ENCODE measurements at regions of chr11 and their contacts with region 1.

Region 1: GRCh38 chr11:86955361-86956120 is at the start of gene FZD4:
- DNase-seq: peak; percentile 86 to 94
- H3K4me3 ChIP-seq: peak within 1 kb of the TSS; percentile 88 to 89
- H3K27ac ChIP-seq: peak within 1 kb of the TSS; percentile 90
- H3K4me1 ChIP-seq: peaks cover 0 to 44% (median 29%) of the 10 kb centered on the region in 4 donors
- H3K27me3 ChIP-seq: no peaks in the 10 kb centered on the region
- CTCF ChIP-seq: peak; percentile 15 to 30

Region 2: GRCh38 chr11:86977441-86978050 is 22.0 kb after region 1 on chr11:
- intact Hi-C with region 1: loop called (anchors 2 kb)
- DNase-seq: peak; percentile 77 to 80
- H3K4me3 ChIP-seq: no peak overlapping the region
- H3K27ac ChIP-seq: peak overlapping the region; percentile 37 to 53
- H3K4me1 ChIP-seq: peaks cover 0 to 48% (median 9%) of the 10 kb centered on the region in 4 donors
- H3K27me3 ChIP-seq: no peaks in the 10 kb centered on the region
- CTCF ChIP-seq: no peak

Region 3: DNA sequence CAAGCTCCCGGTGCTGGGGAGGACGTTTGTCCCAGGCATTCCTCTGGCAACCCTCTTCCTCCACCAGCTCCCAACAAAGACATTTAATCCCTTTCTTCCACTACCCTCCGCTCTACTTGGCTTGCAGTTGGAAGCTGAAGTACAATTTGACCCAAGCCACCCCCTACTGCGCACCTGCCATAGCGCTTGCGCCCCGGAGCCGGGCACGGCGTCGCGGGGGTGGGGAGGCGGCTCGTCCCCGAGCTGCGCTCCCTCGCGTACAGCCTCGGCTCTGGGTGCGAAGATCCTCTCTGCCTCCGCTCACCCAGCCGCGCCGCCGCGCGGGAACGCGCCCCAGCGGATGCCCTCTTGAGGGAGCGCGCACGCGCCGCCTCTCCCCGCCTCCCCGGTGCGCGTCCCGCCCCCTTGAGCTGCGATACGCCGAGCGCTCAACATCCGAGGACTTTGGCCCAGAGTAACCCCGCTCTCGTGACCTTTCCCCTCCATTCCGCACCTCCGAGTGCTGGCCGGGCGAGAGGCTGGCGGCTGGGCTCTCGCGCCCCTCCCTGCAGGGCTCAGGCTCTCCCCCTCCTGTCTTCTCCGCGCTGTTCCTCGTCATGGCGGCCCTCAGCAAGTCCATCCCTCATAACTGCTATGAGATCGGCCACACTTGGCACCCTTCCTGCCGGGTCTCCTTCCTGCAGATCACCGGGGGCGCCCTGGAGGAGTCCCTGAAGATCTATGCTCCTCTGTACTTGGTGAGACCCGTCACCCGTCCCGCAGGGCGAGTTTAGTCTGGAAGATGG is 82.1 kb after region 1 on chr11 and contains the start of gene TMEM135:
- intact Hi-C with region 1: loop called (anchors 1 kb)
- DNase-seq: peak; percentile 94 to 97
- H3K4me3 ChIP-seq: peak within 1 kb of the TSS; percentile 74 to 95
- H3K27ac ChIP-seq: peak within 1 kb of the TSS; percentile 77 to 87
- H3K4me1 ChIP-seq: peaks cover 0 to 42% (median 11%) of the 10 kb centered on the region in 4 donors
- H3K27me3 ChIP-seq: no peaks in the 10 kb centered on the region
- CTCF ChIP-seq: no peak

Measured in tibial artery (tissue), 4 donors.